SK-MEL-5 (cell line): ENCODE measurements at regions of chr9 and their contacts with region 1.

Region 1: DNA sequence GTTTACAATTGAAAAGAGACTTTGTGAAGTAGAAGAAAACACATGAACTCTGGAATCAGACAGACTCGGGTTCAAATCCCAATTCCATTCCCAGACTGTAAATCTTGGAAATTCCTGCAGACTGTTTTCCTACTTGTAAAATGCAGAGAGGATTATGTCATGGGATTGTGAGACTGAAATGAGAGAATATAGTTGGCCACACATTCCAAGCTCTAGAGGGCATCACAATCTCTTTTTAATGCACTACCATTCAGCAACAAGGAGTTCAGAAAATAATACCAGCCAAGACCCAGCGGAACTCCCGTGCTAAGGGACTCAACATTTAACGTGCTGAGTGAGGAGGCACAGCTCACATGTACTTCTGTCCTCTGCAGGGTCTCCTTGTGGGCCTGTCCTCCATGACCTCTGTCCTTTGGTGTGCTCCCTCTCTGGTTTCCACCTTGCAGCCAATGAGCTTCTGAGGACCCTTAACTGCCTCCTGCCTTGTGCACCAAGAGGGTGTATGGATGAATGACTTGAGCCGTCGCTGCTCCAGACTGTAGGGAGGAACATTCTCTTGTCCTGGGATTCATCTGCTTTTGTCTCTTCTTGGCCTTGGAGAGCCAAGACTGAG is 263.5 kb downstream of the NTRK2 start:
- DNase-seq: peak; percentile 59

Region 2: GRCh38 chr9:84711902-84712301 is 221.1 kb before region 1 on chr9:
- in situ Hi-C with region 1: loop called (anchors 25 kb)
- DNase-seq: peak; percentile 98

Region 3: GRCh38 chr9:84788803-84789473 is 144.1 kb before region 1 on chr9:
- in situ Hi-C with region 1: no loop called
- DNase-seq: no peak